ENCODE measurements at regions of chr16 and their contacts with region 1.

Region 1: DNA sequence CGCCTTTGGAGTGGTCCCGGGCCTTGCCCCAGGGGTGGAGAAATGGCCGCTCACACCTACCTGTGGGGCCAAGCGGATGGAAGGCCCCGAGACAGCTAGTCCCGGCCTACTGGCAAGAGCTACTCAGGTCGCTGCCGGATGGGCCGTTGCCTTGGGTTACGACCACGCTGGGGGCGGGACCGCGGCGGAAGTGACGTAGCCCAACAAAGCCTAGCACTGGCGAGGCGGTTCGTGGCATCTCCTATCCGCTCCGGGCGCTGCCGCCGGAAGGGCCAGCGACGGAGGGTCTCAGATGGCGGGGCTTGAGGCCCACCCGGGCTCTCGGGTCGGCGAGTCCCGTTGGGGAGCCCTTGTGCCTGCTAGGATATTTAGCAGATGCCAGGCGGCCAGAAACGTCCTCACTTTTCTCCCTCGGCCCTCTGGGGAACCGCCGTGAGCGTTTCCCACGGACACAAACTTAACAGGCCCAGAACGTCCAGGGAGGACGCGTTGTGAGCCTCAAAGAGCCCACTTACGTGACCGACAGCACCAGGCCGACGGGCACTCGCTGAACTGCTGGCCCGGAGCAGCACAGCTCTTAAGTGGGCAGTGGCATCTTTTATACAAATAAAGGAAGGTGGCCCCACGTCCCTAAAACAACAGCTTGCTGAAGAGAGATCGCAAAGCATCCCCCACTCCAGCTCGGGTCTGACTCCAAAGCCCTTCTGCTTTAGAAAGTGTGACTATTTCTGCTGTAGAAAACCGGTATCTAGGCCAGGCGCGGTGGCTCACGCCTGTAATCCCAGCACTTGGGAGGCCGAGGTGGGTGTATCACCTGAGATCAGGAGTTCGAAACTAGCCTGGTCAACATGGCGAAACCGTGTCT is at the start of gene C16orf46:
- DNase-seq: peak; percentile 94
- H3K4me3 ChIP-seq: peak within 1 kb of the TSS; percentile 61 to 89 (median 64)
- H3K27ac ChIP-seq: peak within 1 kb of the TSS; percentile 85
- H3K4me1 ChIP-seq: peaks cover 9% of the 10 kb centered on the region
- H3K27me3 ChIP-seq: no peaks in the 10 kb centered on the region
- CTCF ChIP-seq: no peak
- total RNA-seq, gene C16orf46: 0.17 to 0.99 TPM

Region 2: GRCh38 chr16:81006814-81007696 is 70.3 kb before region 1 on chr16 and contains the starts of genes CENPN and CMC2:
- CTCF ChIA-PET with region 1: no interaction called
- dilution Hi-C with region 1: no loop called
- in situ Hi-C with region 1: no loop called
- intact Hi-C with region 1: loop called (anchors 2 kb)
- DNase-seq: peak; percentile 98
- H3K4me3 ChIP-seq: peak within 1 kb of the TSS; percentile 86 to 95 (median 93)
- H3K27ac ChIP-seq: peak within 1 kb of the TSS; percentile 97
- H3K4me1 ChIP-seq: peaks cover 9% of the 10 kb centered on the region
- H3K27me3 ChIP-seq: no peaks in the 10 kb centered on the region
- CTCF ChIP-seq: peak in 1 of 2 donors; percentile 29
- total RNA-seq, gene CENPN: 15.2 to 32.5 TPM
- total RNA-seq, gene CMC2: 30.5 to 73.1 TPM

Region 3: GRCh38 chr16:81095953-81096717 is 18.8 kb after region 1 on chr16 and contains the start of gene GCSH:
- CTCF ChIA-PET with region 1: no interaction called
- dilution Hi-C with region 1: no loop called
- in situ Hi-C with region 1: no loop called
- intact Hi-C with region 1: loop called (anchors 1 kb)
- DNase-seq: peak; percentile 99
- H3K4me3 ChIP-seq: peak within 1 kb of the TSS; percentile 85 to 95 (median 92)
- H3K27ac ChIP-seq: peak within 1 kb of the TSS; percentile 74
- H3K4me1 ChIP-seq: peaks cover 7% of the 10 kb centered on the region
- H3K27me3 ChIP-seq: no peaks in the 10 kb centered on the region
- CTCF ChIP-seq: no peak
- total RNA-seq, gene GCSH: 27.5 to 41.9 TPM

Region 4: DNA sequence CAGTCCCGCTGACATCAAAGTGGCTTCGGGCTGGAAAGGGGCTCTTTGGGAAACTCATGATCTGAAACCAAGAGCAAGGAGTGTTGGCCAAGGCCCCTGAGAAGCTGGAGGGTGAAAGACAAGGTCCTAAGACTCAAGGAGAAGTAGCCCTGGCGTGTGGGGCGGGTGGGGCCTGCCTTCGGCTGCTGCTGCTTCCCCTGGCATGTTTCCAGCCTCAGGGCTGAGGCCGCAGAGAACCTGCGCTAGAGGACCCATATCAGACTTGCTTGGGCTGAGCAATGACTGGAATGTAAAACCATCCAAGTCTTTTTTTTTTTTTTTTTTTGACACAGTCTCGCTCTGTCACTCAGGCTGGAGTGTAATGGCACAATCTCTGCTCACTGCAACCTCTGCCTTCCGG is 86.4 kb after region 1 on chr16:
- CTCF ChIA-PET with region 1: no interaction called
- dilution Hi-C with region 1: loop called (anchors 10 kb)
- in situ Hi-C with region 1: no loop called
- intact Hi-C with region 1: no loop called
- DNase-seq: no peak
- H3K4me3 ChIP-seq: no peak overlapping the region
- H3K27ac ChIP-seq: no peak overlapping the region
- H3K4me1 ChIP-seq: no peaks in the 10 kb centered on the region
- H3K27me3 ChIP-seq: no peaks in the 10 kb centered on the region
- CTCF ChIP-seq: no peak

Region 5: GRCh38 chr16:81181013-81181720 is 103.9 kb after region 1 on chr16:
- CTCF ChIA-PET with region 1: no interaction called
- dilution Hi-C with region 1: no loop called
- in situ Hi-C with region 1: no loop called
- intact Hi-C with region 1: loop called (anchors 1 kb)
- DNase-seq: peak; percentile 95
- H3K4me3 ChIP-seq: no peak overlapping the region
- H3K27ac ChIP-seq: peak overlapping the region; percentile 40
- H3K4me1 ChIP-seq: peaks cover 8% of the 10 kb centered on the region
- H3K27me3 ChIP-seq: no peaks in the 10 kb centered on the region
- CTCF ChIP-seq: no peak

Region 6: GRCh38 chr16:81198635-81199034 is 121.3 kb after region 1 on chr16:
- CTCF ChIA-PET with region 1: no interaction called
- dilution Hi-C with region 1: no loop called
- in situ Hi-C with region 1: no loop called
- intact Hi-C with region 1: loop called (anchors 2 kb)
- DNase-seq: no peak
- H3K4me3 ChIP-seq: no peak overlapping the region
- H3K27ac ChIP-seq: no peak overlapping the region
- H3K4me1 ChIP-seq: no peaks in the 10 kb centered on the region
- H3K27me3 ChIP-seq: peaks cover 1% of the 10 kb centered on the region
- CTCF ChIP-seq: peak; percentile 13 to 50

Measured in mammary epithelial cell (primary cell).